ENCODE measurements at regions of chr16 and their contacts with region 1.

Region 1: DNA sequence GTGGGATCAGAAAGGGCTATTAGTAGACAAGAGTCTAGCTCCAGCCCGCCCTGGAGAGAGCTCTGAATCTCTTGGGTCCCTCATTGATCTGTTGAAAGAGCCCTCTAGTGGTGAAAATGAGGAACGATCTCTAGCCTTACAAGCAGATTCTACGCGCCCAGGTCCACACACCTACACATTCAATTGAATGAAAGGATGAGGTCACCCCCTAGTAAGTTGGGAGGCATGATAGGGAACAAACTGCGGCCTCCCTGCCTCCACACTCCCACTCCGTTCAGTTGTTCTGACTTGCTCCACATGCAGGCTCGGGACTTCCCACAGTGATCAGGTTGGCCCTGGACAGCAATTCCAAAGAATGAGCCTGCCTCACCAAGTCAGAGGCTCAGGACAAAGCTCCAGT is 2.9 kb upstream of the CACNG3 start:
- DNase-seq: no peak

Region 2: DNA sequence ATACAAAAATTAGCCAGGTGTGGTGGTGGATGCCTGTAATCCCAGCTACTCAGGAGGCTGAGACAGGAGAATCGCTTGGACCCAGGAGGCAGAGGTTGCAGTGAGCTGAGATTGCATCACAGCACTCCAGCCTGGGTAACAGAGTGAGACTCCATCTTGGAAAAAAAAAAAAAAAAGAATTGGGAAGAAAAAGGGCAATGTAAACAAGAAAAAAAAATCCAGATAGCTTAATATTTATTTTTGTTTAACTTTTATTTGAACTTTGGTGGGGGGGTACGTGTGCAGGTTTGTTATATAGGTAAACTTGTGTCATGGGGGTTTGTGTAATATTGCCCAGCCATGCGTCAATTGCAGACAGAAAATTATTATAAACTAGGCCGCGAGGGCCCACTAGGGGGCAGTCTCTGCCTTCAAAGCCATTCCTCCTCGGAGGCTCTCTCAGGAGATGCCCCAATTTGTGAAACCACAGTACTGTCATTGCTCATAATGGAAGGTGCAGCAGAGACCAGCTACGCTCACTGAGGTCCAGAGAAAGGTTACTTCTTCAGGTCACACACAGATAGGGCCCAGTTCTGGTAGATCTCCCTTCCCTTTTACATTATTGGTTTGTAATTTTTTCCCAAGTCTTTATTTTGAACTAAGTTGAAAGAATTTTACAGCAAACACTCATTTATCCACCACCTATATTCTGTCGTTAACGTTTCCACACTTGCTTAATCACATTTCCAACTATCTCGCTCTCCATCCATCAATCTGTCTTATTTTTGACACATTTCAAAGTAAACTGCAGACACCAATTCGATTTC is 211.2 kb before region 1 on chr16:
- intact Hi-C with region 1: loop called in 1 of 2 experiments (anchors 10 kb)
- DNase-seq: no peak

Region 3: DNA sequence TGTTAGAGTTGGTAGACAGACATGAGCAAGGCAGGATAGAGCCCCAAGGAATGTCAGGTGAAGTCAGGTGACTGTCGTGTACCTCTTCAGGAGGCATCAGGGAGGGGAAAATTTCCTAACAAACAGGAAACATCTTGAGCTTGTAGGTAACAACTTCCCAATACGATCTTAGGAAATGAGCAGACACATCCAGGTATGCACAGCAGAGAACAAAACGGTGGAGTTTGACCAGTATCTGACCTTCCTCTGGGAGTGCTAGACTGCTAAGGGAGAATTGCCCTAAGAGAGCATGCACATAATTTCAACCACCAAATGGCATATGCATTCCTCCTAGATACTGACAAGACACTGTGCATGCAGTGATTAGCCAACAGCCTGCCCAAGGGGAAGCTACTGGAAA is 165.5 kb after region 1 on chr16:
- intact Hi-C with region 1: no loop called
- DNase-seq: no peak

Measured in posterior vena cava (tissue), 2 donors.